Ascending aorta (tissue), 2 donors: ENCODE measurements at regions of chr13 and their contacts with region 1.

Region 1: GRCh38 chr13:110412132-110412914 is 105.2 kb downstream of the COL4A2 start:
- DNase-seq: peak; percentile 81 to 97
- H3K4me3 ChIP-seq: no peak overlapping the region
- H3K27ac ChIP-seq: peak overlapping the region; percentile 90 to 91
- H3K4me1 ChIP-seq: peaks cover 48 to 74% of the 10 kb centered on the region in 2 donors
- H3K27me3 ChIP-seq: no peaks in the 10 kb centered on the region
- CTCF ChIP-seq: peak; percentile 82 to 95 (median 92)

Region 2: GRCh38 chr13:110225609-110226562 is 186.4 kb before region 1 on chr13:
- intact Hi-C with region 1: loop called (anchors 1 kb)
- DNase-seq: no peak
- H3K4me3 ChIP-seq: no peak overlapping the region
- H3K27ac ChIP-seq: peak overlapping the region; percentile 39 to 72
- H3K4me1 ChIP-seq: peaks cover 5 to 26% of the 10 kb centered on the region in 2 donors
- H3K27me3 ChIP-seq: no peaks in the 10 kb centered on the region
- CTCF ChIP-seq: no peak

Region 3: DNA sequence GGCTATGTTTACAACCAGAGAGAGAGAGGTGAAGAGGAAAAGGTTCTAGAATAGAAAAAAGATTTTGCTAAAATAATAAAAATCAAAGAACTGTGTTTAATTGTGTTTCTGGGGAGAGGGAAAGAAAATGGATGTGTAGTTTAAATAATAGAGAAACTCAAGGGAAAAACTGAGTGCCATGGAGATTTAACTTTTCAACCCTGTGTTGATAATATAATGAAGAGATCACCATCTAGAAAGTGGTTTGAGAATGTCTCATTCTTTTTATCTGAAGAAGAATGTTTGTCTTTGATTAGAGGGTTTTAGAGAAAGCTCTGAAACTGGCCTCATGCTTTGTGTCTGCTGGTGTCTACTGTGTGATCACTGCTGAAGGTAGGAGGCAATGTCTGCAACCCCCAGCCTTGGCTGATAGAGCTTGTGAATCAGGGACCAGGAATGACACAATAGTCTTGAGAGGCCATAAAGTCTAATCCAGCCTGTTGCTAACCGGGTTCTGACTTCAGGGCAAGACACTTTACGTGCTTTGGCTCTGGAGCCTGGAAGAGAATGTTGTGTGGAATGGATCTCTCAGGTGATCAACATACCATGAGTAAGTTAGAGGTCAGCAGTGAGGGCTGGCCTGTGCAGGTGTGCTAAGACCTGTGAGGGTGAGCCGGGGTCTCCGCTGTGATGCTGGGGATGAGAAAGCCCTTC is 99.8 kb before region 1 on chr13:
- intact Hi-C with region 1: loop called (anchors 2 kb)
- DNase-seq: peak in 1 of 2 donors; percentile 83
- H3K4me3 ChIP-seq: peak overlapping the region; percentile 84
- H3K27ac ChIP-seq: peak overlapping the region; percentile 95 to 99
- H3K4me1 ChIP-seq: peaks cover 17 to 57% of the 10 kb centered on the region in 2 donors
- H3K27me3 ChIP-seq: no peaks in the 10 kb centered on the region
- CTCF ChIP-seq: no peak

Region 4: GRCh38 chr13:110361365-110361911 is 50.9 kb before region 1 on chr13:
- intact Hi-C with region 1: loop called (anchors 1 kb)
- DNase-seq: peak; percentile 54 to 97
- H3K4me3 ChIP-seq: no peak overlapping the region
- H3K27ac ChIP-seq: peak overlapping the region; percentile 81 to 92
- H3K4me1 ChIP-seq: peaks cover 24 to 49% of the 10 kb centered on the region in 2 donors
- H3K27me3 ChIP-seq: no peaks in the 10 kb centered on the region
- CTCF ChIP-seq: peak in 1 of 3 experiments; percentile 9

Region 5: DNA sequence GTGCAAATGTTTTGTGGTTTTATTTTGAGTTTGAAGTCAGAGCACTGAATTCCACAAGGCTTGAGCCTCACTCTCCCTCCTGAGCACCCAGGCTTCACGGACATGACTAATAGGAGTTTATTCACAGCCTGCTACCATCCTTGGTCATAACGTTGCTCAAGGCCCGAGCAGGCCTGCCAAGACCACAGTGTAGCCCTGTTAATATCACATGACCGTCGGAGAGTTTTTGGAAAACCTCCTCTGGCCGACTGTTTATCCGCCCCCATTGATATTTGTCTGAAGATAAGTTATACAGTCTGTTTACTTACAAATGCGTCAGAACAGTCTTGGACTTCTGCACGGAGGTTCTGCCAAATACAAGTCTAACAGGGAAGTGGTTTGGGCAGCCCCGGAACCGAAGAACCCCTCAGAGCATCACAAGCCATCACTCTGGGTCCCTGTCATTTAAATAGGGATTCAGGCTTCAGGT is 15.4 kb before region 1 on chr13:
- intact Hi-C with region 1: loop called (anchors 1 kb)
- DNase-seq: peak; percentile 93 to 99
- H3K4me3 ChIP-seq: peak overlapping the region; percentile 37 to 41
- H3K27ac ChIP-seq: peak overlapping the region; percentile 98 to 99
- H3K4me1 ChIP-seq: peaks cover 26 to 78% of the 10 kb centered on the region in 2 donors
- H3K27me3 ChIP-seq: no peaks in the 10 kb centered on the region
- CTCF ChIP-seq: no peak